IMR-90 (cell line): ENCODE measurements at regions of chr2 and their contacts with region 1.

Region 1: GRCh38 chr2:161063157-161063954 is 96.9 kb upstream of the TANK start:
- DNase-seq: peak; percentile 86
- ATAC-seq: peak; percentile 95
- H3K4me3 ChIP-seq: no peak overlapping the region
- H3K27ac ChIP-seq: no peak overlapping the region
- H3K4me1 ChIP-seq: peaks cover 6% of the 10 kb centered on the region
- H3K27me3 ChIP-seq: no peaks in the 10 kb centered on the region; the same call in 1 of the 2 replicates
- CTCF ChIP-seq: peak; percentile 90
- POLR2A ChIP-seq: peak; percentile 41; the same call in 1 of the 2 replicates
- RAD21 ChIP-seq: peak; percentile 92

Region 2: DNA sequence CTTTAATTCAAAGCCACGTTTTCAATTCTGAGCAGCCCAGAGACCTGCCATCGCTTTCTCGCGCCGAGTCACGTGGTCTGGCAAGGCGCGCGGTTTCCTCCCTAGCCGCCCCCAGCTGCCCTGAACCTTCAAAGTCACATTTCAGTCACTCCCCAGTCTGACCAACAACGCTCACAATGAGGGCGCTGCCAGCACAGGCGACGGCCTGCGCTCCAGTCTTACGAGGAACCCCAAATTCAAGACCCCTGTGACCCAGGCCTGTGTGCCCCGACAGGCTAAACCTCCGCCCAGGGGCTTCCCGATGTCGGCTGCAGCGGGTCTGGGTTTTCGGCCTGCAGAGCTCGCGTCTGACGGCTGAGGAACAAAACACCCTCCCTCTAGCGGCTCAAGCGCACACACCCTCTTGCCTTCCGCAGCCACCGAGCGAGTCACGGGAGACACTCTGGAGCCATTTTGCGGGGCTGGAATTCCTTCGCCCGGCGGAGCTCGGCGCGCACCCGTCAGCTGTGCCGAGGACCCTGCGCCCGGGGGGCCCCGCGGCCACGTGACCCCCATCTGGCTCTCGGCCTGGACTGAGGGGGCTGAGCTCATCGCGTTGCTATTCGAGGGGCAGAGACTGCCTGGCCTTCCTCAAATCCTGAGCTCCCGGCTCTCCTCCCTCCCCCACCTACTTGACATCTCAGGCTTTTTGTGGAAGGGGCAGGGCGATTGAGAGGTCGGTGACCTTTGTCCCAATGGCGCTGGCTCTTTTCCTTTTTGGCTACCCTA is 793.4 kb before region 1 on chr2:
- CTCF ChIA-PET with region 1: no interaction called
- POLR2A ChIA-PET with region 1: no interaction called
- dilution Hi-C with region 1: no loop called
- in situ Hi-C with region 1: no loop called
- intact Hi-C with region 1: loop called (anchors 5 kb)
- DNase-seq: peak; percentile 92
- ATAC-seq: peak; percentile 91
- H3K4me3 ChIP-seq: peak overlapping the region; percentile 43
- H3K27ac ChIP-seq: peak overlapping the region; percentile 86
- H3K4me1 ChIP-seq: peaks cover 20% of the 10 kb centered on the region
- H3K27me3 ChIP-seq: no peaks in the 10 kb centered on the region
- CTCF ChIP-seq: peak; percentile 68
- POLR2A ChIP-seq: no peak
- RAD21 ChIP-seq: peak; percentile 57

Region 3: DNA sequence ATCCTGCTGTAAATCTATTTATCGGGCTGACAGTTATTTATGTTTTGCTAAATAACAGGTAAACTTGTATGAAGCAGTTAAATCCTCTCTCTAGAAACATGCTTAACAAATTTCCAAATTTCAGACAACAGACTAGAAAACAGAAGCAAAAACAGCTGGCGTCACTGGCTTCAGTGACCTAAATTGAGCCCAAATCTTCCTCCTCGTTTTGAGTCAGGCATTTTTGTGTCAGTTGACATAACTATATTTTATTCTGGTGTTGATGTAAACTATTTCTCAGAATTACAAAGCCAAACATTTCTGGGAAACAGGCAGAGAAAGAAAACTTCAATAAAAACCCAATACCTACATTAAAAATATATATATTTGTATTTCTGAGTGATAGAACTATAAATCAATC is 591.4 kb before region 1 on chr2:
- CTCF ChIA-PET with region 1: no interaction called
- POLR2A ChIA-PET with region 1: interaction called, 12 read pairs
- dilution Hi-C with region 1: no loop called
- in situ Hi-C with region 1: no loop called
- intact Hi-C with region 1: no loop called
- DNase-seq: no peak
- ATAC-seq: no peak
- H3K4me3 ChIP-seq: no peak overlapping the region
- H3K27ac ChIP-seq: peak overlapping the region; percentile 32; the same call in 1 of the 2 replicates
- H3K4me1 ChIP-seq: peaks cover 18% of the 10 kb centered on the region
- H3K27me3 ChIP-seq: no peaks in the 10 kb centered on the region
- CTCF ChIP-seq: no peak
- POLR2A ChIP-seq: no peak
- RAD21 ChIP-seq: no peak

Region 4: GRCh38 chr2:160590664-160591063 is 472.7 kb before region 1 on chr2:
- CTCF ChIA-PET with region 1: no interaction called
- POLR2A ChIA-PET with region 1: no interaction called
- dilution Hi-C with region 1: no loop called
- in situ Hi-C with region 1: no loop called
- intact Hi-C with region 1: loop called (anchors 10 kb)
- DNase-seq: no peak
- ATAC-seq: no peak
- H3K4me3 ChIP-seq: no peak overlapping the region
- H3K27ac ChIP-seq: no peak overlapping the region
- H3K4me1 ChIP-seq: no peaks in the 10 kb centered on the region
- H3K27me3 ChIP-seq: no peaks in the 10 kb centered on the region
- CTCF ChIP-seq: no peak
- POLR2A ChIP-seq: no peak
- RAD21 ChIP-seq: no peak

Region 5: GRCh38 chr2:161004379-161004778 is 59.0 kb before region 1 on chr2:
- CTCF ChIA-PET with region 1: interaction called, 16 read pairs
- POLR2A ChIA-PET with region 1: no interaction called
- dilution Hi-C with region 1: no loop called
- in situ Hi-C with region 1: no loop called
- intact Hi-C with region 1: loop called (anchors 2 kb)
- DNase-seq: peak; percentile 20
- ATAC-seq: peak; percentile 46; the same call in 1 of the 2 replicates
- H3K4me3 ChIP-seq: no peak overlapping the region
- H3K27ac ChIP-seq: no peak overlapping the region
- H3K4me1 ChIP-seq: peaks cover 2% of the 10 kb centered on the region; the same call in 1 of the 2 replicates
- H3K27me3 ChIP-seq: no peaks in the 10 kb centered on the region
- CTCF ChIP-seq: peak; percentile 53
- POLR2A ChIP-seq: no peak
- RAD21 ChIP-seq: peak; percentile 39

Region 6: GRCh38 chr2:161039071-161039470 is 24.3 kb before region 1 on chr2:
- CTCF ChIA-PET with region 1: no interaction called
- POLR2A ChIA-PET with region 1: no interaction called
- dilution Hi-C with region 1: no loop called
- in situ Hi-C with region 1: no loop called
- intact Hi-C with region 1: no loop called
- DNase-seq: no peak
- ATAC-seq: no peak
- H3K4me3 ChIP-seq: no peak overlapping the region
- H3K27ac ChIP-seq: no peak overlapping the region
- H3K4me1 ChIP-seq: peaks cover 3% of the 10 kb centered on the region
- H3K27me3 ChIP-seq: no peaks in the 10 kb centered on the region
- CTCF ChIP-seq: no peak
- POLR2A ChIP-seq: no peak
- RAD21 ChIP-seq: no peak

Region 7: DNA sequence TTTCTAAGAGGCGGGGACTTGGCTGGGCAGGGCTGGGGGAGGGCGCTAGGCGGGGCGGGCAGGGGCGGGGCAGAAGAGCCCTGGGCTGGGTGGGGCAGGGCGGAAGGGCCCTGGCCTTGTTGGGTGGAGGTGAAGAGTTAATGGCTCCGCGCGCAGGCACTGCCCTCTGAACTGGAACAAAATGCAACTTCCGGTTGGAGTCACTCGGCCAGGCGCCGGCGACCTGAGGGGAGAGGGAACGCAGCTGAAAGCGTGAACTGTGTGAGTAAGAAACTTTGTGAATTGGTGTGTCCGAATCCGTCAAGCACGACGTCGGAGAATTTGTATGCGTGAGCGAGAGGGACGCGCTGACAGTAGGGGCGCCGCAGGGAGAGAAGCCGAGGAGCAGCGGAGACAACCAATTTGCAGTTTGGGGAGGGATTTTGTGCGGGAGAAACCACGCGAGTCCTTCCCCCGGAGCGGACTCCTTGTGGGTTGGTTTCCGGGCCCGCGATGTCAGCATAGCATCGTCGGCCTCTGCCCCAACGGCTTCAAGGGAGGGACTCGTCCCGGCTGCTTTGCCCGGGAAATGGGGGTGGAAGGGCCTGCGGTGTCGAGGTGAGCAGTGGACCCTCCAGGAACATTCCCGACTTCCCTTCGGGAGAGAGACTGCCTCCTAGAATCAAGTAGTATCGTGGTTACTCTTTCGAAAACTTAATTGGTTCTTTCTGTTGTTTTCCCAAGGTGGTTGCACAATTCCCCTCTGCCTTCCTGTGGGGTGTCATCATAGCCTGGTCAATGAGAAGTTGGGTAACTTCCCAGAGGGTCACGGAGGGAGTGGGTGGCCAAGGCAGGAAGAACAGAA is 97.1 kb after region 1 on chr2 and contains the start of gene TANK:
- CTCF ChIA-PET with region 1: no interaction called
- POLR2A ChIA-PET with region 1: no interaction called
- dilution Hi-C with region 1: no loop called
- in situ Hi-C with region 1: no loop called
- intact Hi-C with region 1: loop called (anchors 5 kb)
- DNase-seq: peak; percentile 96
- ATAC-seq: peak; percentile 94
- H3K4me3 ChIP-seq: peak within 1 kb of the TSS; percentile 68
- H3K27ac ChIP-seq: peak within 1 kb of the TSS; percentile 88
- H3K4me1 ChIP-seq: no peaks in the 10 kb centered on the region
- H3K27me3 ChIP-seq: no peaks in the 10 kb centered on the region
- CTCF ChIP-seq: no peak
- POLR2A ChIP-seq: peak; percentile 94
- RAD21 ChIP-seq: no peak
- total RNA-seq, gene TANK: 41.9 and 46.4 TPM in 2 replicates

Region 8: GRCh38 chr2:161332371-161332967 is 269.1 kb after region 1 on chr2:
- CTCF ChIA-PET with region 1: no interaction called
- POLR2A ChIA-PET with region 1: no interaction called
- dilution Hi-C with region 1: no loop called
- in situ Hi-C with region 1: no loop called
- intact Hi-C with region 1: no loop called
- DNase-seq: no peak
- ATAC-seq: no peak
- H3K4me3 ChIP-seq: no peak overlapping the region
- H3K27ac ChIP-seq: no peak overlapping the region
- H3K4me1 ChIP-seq: no peaks in the 10 kb centered on the region
- H3K27me3 ChIP-seq: no peaks in the 10 kb centered on the region
- CTCF ChIP-seq: no peak
- POLR2A ChIP-seq: no peak
- RAD21 ChIP-seq: no peak